Endothelial cell of umbilical vein (primary cell): ENCODE measurements at regions of chr1 and their contacts with region 1.

Region 1: DNA sequence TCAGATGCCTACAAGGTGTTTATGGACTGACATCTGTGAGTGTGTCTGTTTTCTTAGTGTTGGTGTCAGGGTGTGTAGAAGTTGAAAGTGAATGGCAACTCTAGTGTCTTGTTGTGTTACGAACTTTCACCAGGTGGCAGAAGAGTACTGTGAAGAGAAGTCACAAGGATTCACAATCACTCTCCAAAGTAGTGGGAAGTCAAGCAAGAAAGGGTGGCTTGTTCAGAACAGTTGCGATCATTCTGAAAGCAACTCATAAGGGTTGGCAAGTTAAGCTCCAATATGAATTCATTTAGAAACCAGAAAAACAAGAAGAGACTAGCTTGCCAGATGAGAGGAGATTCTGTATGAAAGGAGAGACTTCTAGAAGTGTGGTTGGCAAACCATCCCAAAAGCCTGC is 86.1 kb downstream of the FASLG start:
- DNase-seq: peak; percentile 82
- H3K4me3 ChIP-seq: no peak overlapping the region
- H3K27ac ChIP-seq: peak overlapping the region; percentile 86
- H3K4me1 ChIP-seq: peaks cover 21% of the 10 kb centered on the region
- H3K27me3 ChIP-seq: no peaks in the 10 kb centered on the region
- CTCF ChIP-seq: peak; percentile 64 to 66
- POLR2A ChIP-seq: no peak

Region 2: GRCh38 chr1:172670791-172671190 is 74.2 kb before region 1 on chr1:
- CTCF ChIA-PET with region 1: no interaction called
- POLR2A ChIA-PET with region 1: no interaction called
- dilution Hi-C with region 1: no loop called
- intact Hi-C with region 1: no loop called
- DNase-seq: no peak
- H3K4me3 ChIP-seq: no peak overlapping the region
- H3K27ac ChIP-seq: no peak overlapping the region
- H3K4me1 ChIP-seq: no peaks in the 10 kb centered on the region
- H3K27me3 ChIP-seq: peaks cover 6 to 8% of the 10 kb centered on the region in 2 experiments
- CTCF ChIP-seq: no peak
- POLR2A ChIP-seq: no peak

Region 3: DNA sequence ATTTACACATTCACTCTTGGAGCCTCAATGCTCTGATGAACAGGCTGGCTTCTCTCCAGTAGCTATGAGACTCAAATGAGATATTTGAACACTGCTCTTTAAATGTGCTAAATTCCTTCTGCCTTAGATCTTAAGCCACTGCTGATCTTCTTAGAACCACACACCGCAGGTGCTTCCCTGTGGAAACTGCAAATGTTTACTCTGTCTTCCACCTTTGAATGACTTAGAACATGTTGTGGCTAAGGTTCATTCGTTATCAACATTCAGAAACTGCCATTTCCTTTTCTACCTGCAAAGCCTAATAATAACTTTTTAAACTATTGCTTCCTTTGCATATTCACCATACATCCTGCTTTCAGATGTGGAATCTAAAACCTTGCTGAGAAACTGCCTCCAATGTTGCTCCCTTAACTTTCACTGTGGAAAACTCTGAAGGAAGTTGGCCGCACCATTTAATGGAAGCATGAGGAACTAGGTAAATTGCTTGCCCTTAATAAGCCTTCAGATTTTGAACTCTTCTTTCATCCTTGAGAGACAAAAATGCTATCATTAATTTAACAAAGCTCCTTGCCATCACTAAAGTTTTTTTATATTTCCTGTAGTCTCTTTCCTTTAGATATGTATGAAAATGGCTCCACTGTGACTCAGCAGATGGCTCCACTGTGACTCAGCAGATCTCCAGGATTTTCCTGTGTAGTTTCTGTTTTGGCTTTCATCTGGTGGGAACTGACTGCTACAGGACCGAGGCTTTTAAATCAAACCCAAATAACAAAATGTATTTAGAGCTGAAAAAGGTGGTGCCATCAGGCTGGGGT is 162.0 kb after region 1 on chr1:
- CTCF ChIA-PET with region 1: interaction called, 3 read pairs
- POLR2A ChIA-PET with region 1: no interaction called
- dilution Hi-C with region 1: no loop called
- intact Hi-C with region 1: loop called (anchors 1 kb)
- DNase-seq: peak; percentile 96
- H3K4me3 ChIP-seq: no peak overlapping the region
- H3K27ac ChIP-seq: peak overlapping the region; percentile 88
- H3K4me1 ChIP-seq: peaks cover 84% of the 10 kb centered on the region
- H3K27me3 ChIP-seq: no peaks in the 10 kb centered on the region
- CTCF ChIP-seq: no peak
- POLR2A ChIP-seq: peak; percentile 58

Region 4: GRCh38 chr1:173122958-173123852 is 378.2 kb after region 1 on chr1:
- CTCF ChIA-PET with region 1: no interaction called
- POLR2A ChIA-PET with region 1: no interaction called
- dilution Hi-C with region 1: no loop called
- intact Hi-C with region 1: loop called (anchors 5 kb)
- DNase-seq: peak; percentile 65
- H3K4me3 ChIP-seq: peak overlapping the region in 2 of 3 experiments; percentile 6 to 52
- H3K27ac ChIP-seq: peak overlapping the region; percentile 1
- H3K4me1 ChIP-seq: peaks cover 18% of the 10 kb centered on the region
- H3K27me3 ChIP-seq: no peaks in the 10 kb centered on the region
- CTCF ChIP-seq: no peak
- POLR2A ChIP-seq: no peak

Region 5: DNA sequence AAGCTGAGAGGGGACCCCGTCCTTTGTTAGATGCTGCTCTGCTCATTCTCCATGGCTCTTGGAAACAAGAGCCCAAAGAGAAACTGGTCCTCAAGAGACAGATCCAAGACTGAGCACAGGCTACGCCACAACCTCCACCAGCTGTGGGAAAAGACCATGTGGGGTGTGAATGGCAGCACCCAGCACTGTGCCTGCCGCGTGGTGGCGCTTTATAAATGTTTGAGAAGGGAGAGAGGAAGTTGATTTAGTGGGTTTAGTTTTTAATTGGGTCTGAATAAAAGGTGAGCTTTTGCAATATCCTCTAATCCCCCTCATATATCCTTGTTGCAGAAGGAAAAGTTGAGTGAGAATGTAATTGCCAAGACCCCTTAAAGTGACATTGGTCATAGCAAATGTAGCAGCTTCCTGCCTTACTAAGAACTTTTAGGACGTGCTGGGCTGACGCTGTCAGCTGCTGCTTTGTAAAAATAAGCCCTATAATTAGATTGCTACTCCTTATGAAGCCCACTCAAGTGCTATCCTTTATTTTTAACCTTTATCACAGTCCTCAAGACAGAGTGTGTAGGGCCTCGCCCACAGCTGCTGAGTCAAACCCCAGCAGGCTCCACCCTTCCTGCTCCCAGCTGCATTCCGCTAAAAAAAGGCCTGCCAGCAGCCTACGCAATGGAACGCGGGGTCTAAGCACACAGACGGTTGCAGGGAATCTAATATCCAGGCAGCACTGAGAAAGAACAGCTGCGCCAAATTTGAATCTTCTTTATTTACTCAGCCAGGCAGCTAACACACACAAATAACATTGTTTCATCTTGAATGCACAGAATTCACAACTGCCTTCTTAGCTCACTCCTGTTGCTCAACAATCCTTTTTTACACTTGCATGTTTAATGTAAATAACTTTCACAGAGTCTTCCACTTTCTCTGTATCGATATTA is 684.7 kb after region 1 on chr1:
- CTCF ChIA-PET with region 1: interaction called, 47 read pairs
- POLR2A ChIA-PET with region 1: no interaction called
- dilution Hi-C with region 1: no loop called
- intact Hi-C with region 1: loop called (anchors 1 kb)
- DNase-seq: peak; percentile 75
- H3K4me3 ChIP-seq: no peak overlapping the region
- H3K27ac ChIP-seq: peak overlapping the region; percentile 64
- H3K4me1 ChIP-seq: peaks cover 12% of the 10 kb centered on the region
- H3K27me3 ChIP-seq: no peaks in the 10 kb centered on the region
- CTCF ChIP-seq: peak; percentile 56 to 65
- POLR2A ChIP-seq: no peak

Region 6: DNA sequence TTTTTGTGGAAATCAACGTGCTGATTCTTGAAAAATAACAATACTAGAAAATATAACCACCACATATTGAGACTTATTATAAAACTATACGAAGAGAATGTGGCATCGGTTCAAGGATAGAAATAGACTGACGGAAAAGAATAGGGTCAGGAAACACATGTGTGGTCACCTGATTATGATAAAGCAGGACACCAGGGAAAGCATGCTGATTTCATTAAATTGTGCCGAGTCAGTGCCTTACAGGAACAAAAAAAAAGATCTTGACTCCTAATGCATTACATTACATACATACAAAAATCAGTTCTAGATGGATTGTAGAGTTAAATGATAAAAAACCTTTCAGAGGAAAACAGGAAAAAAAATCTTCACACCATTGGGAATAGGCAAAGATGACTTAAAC is 1215.6 kb after region 1 on chr1:
- CTCF ChIA-PET with region 1: no interaction called
- POLR2A ChIA-PET with region 1: no interaction called
- dilution Hi-C with region 1: no loop called
- intact Hi-C with region 1: loop called (anchors 10 kb)
- DNase-seq: peak; percentile 79
- H3K4me3 ChIP-seq: no peak overlapping the region
- H3K27ac ChIP-seq: peak overlapping the region; percentile 61
- H3K4me1 ChIP-seq: peaks cover 12% of the 10 kb centered on the region
- H3K27me3 ChIP-seq: no peaks in the 10 kb centered on the region
- CTCF ChIP-seq: no peak
- POLR2A ChIP-seq: no peak

Region 7: GRCh38 chr1:174743654-174744561 is 1998.9 kb after region 1 on chr1:
- CTCF ChIA-PET with region 1: interaction called, 3 read pairs
- POLR2A ChIA-PET with region 1: no interaction called
- dilution Hi-C with region 1: no loop called
- intact Hi-C with region 1: loop called (anchors 5 kb)
- DNase-seq: peak; percentile 52
- H3K4me3 ChIP-seq: no peak overlapping the region
- H3K27ac ChIP-seq: no peak overlapping the region
- H3K4me1 ChIP-seq: no peaks in the 10 kb centered on the region
- H3K27me3 ChIP-seq: no peaks in the 10 kb centered on the region
- CTCF ChIP-seq: peak; percentile 26 to 47
- POLR2A ChIP-seq: no peak